RWPE1 (cell line): ENCODE measurements at regions of chr3 and their contacts with region 1.

Region 1: DNA sequence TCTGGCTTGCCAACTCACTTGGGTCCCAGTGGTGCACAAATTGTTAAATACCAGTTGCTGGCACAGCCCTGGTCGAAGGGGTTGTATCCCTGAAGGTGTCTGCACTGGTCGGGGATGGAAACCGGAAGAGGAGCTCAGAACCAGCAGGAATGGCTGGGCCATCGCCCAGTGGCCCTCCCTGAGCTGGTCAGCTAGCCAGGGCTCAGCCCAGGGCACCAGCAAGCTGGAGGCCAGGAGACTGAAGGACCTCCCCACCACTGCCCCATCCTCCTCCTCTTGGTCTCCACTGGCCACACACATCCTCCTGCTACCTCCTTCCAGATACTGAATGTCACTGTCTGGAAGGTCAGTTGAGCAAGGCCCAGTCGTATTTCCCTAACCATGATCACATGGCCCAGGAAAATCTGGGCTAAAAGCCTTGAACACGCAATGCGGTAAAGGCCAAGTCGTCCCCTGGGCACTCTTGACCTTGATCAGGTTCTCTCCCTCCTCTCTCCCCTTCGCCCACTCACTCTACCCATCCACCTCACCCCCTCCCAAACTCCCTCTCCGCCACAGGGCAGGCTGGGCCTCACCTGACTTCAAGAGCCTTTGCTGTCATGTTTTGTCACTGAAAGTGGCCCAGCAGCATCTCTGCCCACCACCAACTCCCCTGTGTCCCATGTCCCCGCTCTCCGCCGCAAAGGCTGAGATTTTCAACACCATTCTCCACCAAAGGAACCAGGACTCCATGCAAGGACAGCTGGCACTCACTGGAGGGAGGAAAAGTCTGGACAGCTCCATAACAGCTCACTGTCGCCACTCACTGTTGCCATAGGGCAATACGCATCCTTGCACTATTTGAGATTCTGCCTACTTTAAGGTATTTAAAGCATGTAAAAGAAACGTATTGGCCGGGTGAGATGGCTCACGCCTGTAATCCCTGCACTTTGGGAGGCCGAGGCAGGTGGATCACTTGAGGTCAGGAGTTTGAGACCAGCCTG is 12.1 kb downstream of the ZDHHC19 start:
- DNase-seq: no peak
- H3K27ac ChIP-seq: no peak overlapping the region
- CTCF ChIP-seq: no peak

Region 2: GRCh38 chr3:196073188-196073838 is 125.7 kb before region 1 on chr3:
- CTCF ChIA-PET with region 1: interaction called, 16 read pairs
- POLR2A ChIA-PET with region 1: interaction called, 3 read pairs
- DNase-seq: peak; percentile 73
- H3K27ac ChIP-seq: no peak overlapping the region
- CTCF ChIP-seq: peak; percentile 85